ENCODE measurements at regions of chr3 and their contacts with region 1.

Region 1: DNA sequence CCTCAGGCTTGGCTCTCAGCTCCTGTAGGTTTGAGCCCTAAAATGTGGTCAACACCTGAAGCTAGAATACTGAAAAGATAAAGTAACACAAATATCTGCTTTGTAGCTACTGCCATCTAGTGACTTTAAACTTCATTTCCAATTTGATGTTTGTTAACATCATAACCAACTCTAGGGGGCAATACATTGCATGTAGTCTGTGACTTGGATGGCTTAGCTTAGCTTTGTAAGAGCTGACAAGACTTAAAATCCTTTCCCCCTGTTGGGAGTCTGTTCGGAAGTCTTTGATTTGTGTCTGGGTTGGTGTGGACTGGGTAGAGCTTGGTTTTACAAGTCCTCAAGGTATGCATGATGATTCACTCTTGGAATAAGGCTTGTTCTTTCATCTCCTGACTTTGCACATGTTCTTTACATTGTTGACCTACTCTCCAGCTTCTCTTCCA is 51.7 kb downstream of the SCN11A start:
- DNase-seq: peak; percentile 62
- H3K4me3 Mint-ChIP-seq: no peak overlapping the region
- H3K27ac Mint-ChIP-seq: no peak overlapping the region
- H3K4me1 Mint-ChIP-seq: no peaks in the 10 kb centered on the region
- H3K27me3 Mint-ChIP-seq: peaks cover 17% of the 10 kb centered on the region

Region 2: DNA sequence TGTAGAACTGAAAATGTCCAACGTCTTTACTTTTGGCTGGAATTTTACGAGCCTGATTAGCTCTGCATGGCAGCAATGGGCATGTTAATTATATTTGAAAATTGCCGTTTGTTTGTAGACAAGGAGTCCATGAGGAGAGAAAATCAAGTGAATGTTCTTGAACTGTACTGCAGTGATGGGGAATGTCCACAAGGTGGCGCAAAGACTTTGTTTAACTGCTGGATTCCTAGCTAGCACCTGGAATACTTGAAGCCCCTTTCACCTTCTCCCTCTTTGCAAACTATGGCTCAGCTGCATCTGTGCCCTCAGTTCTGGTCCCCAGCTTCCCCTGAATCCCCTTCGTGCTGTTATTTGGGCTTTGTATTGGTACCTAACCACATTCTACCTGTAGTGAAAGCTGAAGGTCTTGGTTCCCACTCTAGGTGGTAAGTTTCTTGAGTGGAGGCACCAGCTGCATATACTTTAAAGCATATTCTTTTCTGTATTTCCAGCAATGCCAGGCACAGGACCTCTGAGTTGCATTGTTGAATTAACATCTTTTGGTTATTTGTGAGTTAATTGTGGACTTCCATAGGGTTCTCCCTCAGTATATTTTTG is 478.5 kb before region 1 on chr3:
- intact Hi-C with region 1: loop called (anchors 10 kb)
- DNase-seq: peak; percentile 87
- H3K4me3 Mint-ChIP-seq: no peak overlapping the region
- H3K27ac Mint-ChIP-seq: no peak overlapping the region
- H3K4me1 Mint-ChIP-seq: peaks cover 25% of the 10 kb centered on the region
- H3K27me3 Mint-ChIP-seq: no peaks in the 10 kb centered on the region

Region 3: GRCh38 chr3:38743043-38743442 is 257.0 kb before region 1 on chr3:
- intact Hi-C with region 1: loop called (anchors 10 kb)
- DNase-seq: no peak
- H3K4me3 Mint-ChIP-seq: no peak overlapping the region
- H3K27ac Mint-ChIP-seq: no peak overlapping the region
- H3K4me1 Mint-ChIP-seq: no peaks in the 10 kb centered on the region
- H3K27me3 Mint-ChIP-seq: peaks cover 14% of the 10 kb centered on the region

Region 4: DNA sequence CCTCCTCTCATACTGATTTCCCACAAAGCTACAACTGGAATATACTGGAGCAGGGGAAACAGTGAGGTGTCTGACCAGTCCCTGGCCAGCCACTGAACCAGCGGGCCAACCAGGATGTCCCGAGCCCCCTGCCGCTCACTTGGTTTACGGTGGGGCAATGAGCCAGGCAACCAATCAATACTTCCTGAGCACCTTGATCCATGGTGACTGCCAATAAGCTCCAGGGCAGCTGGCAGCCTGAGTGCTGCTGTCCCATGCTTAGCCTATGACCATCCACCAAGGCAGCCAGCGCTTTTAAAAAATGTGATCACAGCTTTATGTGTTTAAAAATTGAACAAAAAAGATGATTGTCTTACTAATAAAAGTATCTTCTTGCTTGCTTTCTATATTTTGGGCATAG is 188.2 kb before region 1 on chr3:
- intact Hi-C with region 1: no loop called
- DNase-seq: no peak
- H3K4me3 Mint-ChIP-seq: no peak overlapping the region
- H3K27ac Mint-ChIP-seq: no peak overlapping the region
- H3K4me1 Mint-ChIP-seq: no peaks in the 10 kb centered on the region
- H3K27me3 Mint-ChIP-seq: no peaks in the 10 kb centered on the region

Region 5: DNA sequence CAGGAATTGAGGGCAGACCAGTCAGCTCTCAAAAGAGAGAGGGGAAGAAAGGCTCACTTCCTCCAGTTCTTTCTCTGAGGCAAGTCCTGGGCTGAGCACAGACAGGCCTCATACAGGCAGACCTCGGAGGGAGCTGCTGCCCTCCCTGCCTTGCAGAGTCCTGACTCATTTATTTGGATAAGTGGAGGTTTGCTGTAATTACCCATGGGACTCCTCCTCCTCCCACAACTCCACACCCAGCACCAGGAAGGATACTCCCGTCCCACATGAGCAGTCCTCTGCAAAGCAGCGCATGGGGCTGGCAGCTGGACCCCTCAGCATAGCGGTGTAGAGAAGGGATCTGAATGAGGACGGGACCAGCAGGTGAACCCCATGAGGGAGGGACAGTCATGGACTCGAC is 170.6 kb before region 1 on chr3:
- intact Hi-C with region 1: no loop called
- DNase-seq: no peak
- H3K4me3 Mint-ChIP-seq: no peak overlapping the region
- H3K27ac Mint-ChIP-seq: no peak overlapping the region
- H3K4me1 Mint-ChIP-seq: peaks cover 4% of the 10 kb centered on the region
- H3K27me3 Mint-ChIP-seq: no peaks in the 10 kb centered on the region

Region 6: DNA sequence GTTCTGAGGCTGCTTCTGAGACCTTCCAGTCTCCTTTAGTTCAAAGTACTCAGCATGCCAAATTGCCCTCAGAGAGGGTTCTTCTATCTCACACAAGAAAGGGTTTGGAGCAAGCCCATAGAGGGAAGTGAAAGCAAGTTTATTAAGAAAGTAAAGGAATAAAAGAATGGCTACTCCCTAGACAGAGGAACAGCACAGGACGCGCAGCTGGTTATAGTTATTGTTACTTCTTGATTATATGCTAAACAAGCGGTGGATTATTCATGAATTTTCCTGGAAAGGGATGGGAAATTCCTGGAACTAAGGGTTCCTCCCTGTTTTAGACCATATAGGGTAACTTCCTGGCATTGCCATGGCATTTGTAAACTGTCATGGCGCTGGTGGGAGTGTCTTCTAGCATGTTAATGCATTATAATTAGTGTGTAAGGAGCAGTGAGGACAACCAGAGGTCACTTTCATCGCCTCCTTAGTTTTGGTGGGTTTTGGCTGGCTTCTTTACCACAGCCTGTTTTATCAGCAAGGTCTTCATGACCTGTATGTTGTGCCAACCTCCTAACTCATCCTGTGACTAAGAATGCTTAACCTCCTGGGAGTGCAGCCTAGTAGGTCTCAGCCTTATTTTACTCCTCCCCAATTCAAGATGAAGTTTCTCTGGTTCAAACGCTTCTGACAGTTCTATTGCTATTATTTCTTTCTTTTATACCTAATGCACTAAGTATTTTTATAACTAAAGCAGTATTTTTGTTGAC is 25.4 kb after region 1 on chr3:
- intact Hi-C with region 1: no loop called
- DNase-seq: no peak
- H3K4me3 Mint-ChIP-seq: no peak overlapping the region
- H3K27ac Mint-ChIP-seq: no peak overlapping the region
- H3K4me1 Mint-ChIP-seq: no peaks in the 10 kb centered on the region
- H3K27me3 Mint-ChIP-seq: peaks cover 28% of the 10 kb centered on the region

Region 7: GRCh38 chr3:39260957-39261356 is 260.9 kb after region 1 on chr3:
- intact Hi-C with region 1: no loop called
- DNase-seq: peak; percentile 92
- H3K4me3 Mint-ChIP-seq: peak overlapping the region; percentile 26
- H3K27ac Mint-ChIP-seq: peak overlapping the region; percentile 74
- H3K4me1 Mint-ChIP-seq: peaks cover 62% of the 10 kb centered on the region
- H3K27me3 Mint-ChIP-seq: peaks cover 8% of the 10 kb centered on the region

Measured in activated CD4-positive, alpha-beta T cell treated with anti-CD3 and anti-CD28 coated beads, Interleukin-2, amount 10 ng/mL, durations not matched to agents 24 days and 14 days (primary cell).